CD4-positive, alpha-beta T cell (primary cell): ENCODE measurements at regions of chrX and their contacts with region 1.

Region 1: GRCh38 chrX:101931488-101932248 is at the start of gene ZMAT1:
- DNase-seq: peak; percentile 84 to 96 (median 92)
- ATAC-seq: peak; percentile 84
- H3K4me3 ChIP-seq: peak within 1 kb of the TSS; percentile 63
- H3K4me3 Mint-ChIP-seq: peak within 1 kb of the TSS; percentile 90
- H3K27ac ChIP-seq: peak within 1 kb of the TSS; percentile 69 to 82
- H3K27ac Mint-ChIP-seq: peak within 1 kb of the TSS; percentile 90
- H3K4me1 ChIP-seq: peaks cover 9% of the 10 kb centered on the region
- H3K4me1 Mint-ChIP-seq: peaks cover 17% of the 10 kb centered on the region
- H3K27me3 ChIP-seq: no peaks in the 10 kb centered on the region
- H3K27me3 Mint-ChIP-seq: no peaks in the 10 kb centered on the region
- CTCF ChIP-seq: no peak
- total RNA-seq, gene ZMAT1: 19.2 to 20.2 TPM

Region 2: GRCh38 chrX:101390664-101391525 is 540.8 kb before region 1 on chrX and contains the start of gene RPL36A:
- CTCF ChIA-PET with region 1: interaction called, 3 read pairs
- POLR2A ChIA-PET with region 1: interaction called, 18 read pairs
- intact Hi-C with region 1: no loop called
- DNase-seq: peak; percentile 57 to 92 (median 73)
- ATAC-seq: peak; percentile 92
- H3K4me3 ChIP-seq: peak within 1 kb of the TSS; percentile 71
- H3K4me3 Mint-ChIP-seq: peak within 1 kb of the TSS; percentile 95
- H3K27ac ChIP-seq: peak within 1 kb of the TSS; percentile 41 to 82
- H3K27ac Mint-ChIP-seq: peak within 1 kb of the TSS; percentile 95
- H3K4me1 ChIP-seq: peaks cover 15% of the 10 kb centered on the region
- H3K4me1 Mint-ChIP-seq: peaks cover 27% of the 10 kb centered on the region
- H3K27me3 ChIP-seq: no peaks in the 10 kb centered on the region
- H3K27me3 Mint-ChIP-seq: no peaks in the 10 kb centered on the region
- CTCF ChIP-seq: peak; percentile 72
- total RNA-seq, gene RPL36A: 417 to 536 TPM

Region 3: GRCh38 chrX:101415180-101416145 is 516.2 kb before region 1 on chrX:
- CTCF ChIA-PET with region 1: no interaction called
- POLR2A ChIA-PET with region 1: interaction called, 16 read pairs
- intact Hi-C with region 1: loop called (anchors 5 kb)
- DNase-seq: peak in 5 of 14 experiments; percentile 11 to 84 (median 76)
- ATAC-seq: peak; percentile 81
- H3K4me3 ChIP-seq: no peak overlapping the region
- H3K4me3 Mint-ChIP-seq: peak overlapping the region; percentile 84
- H3K27ac ChIP-seq: peak overlapping the region; percentile 21 to 55
- H3K27ac Mint-ChIP-seq: peak overlapping the region; percentile 80
- H3K4me1 ChIP-seq: peaks cover 36% of the 10 kb centered on the region
- H3K4me1 Mint-ChIP-seq: peaks cover 65% of the 10 kb centered on the region
- H3K27me3 ChIP-seq: no peaks in the 10 kb centered on the region
- H3K27me3 Mint-ChIP-seq: no peaks in the 10 kb centered on the region
- CTCF ChIP-seq: peak; percentile 64

Region 4: GRCh38 chrX:101799387-101799786 is 132.3 kb before region 1 on chrX:
- CTCF ChIA-PET with region 1: no interaction called
- POLR2A ChIA-PET with region 1: no interaction called
- intact Hi-C with region 1: loop called in 1 of 2 experiments (anchors 5 kb)
- DNase-seq: peak; percentile 51 to 89 (median 70)
- ATAC-seq: peak; percentile 100
- H3K4me3 ChIP-seq: no peak overlapping the region
- H3K4me3 Mint-ChIP-seq: peak overlapping the region; percentile 44
- H3K27ac ChIP-seq: no peak overlapping the region
- H3K27ac Mint-ChIP-seq: peak overlapping the region; percentile 21
- H3K4me1 ChIP-seq: peaks cover 3% of the 10 kb centered on the region
- H3K4me1 Mint-ChIP-seq: peaks cover 12% of the 10 kb centered on the region
- H3K27me3 ChIP-seq: no peaks in the 10 kb centered on the region
- H3K27me3 Mint-ChIP-seq: no peaks in the 10 kb centered on the region
- CTCF ChIP-seq: peak; percentile 57

Region 5: GRCh38 chrX:102155806-102156179 is 224.1 kb after region 1 on chrX and contains the start of gene BEX5:
- CTCF ChIA-PET with region 1: no interaction called
- POLR2A ChIA-PET with region 1: interaction called, 18 read pairs
- intact Hi-C with region 1: no loop called
- DNase-seq: peak; percentile 23 to 87 (median 46)
- ATAC-seq: peak; percentile 95
- H3K4me3 ChIP-seq: peak within 1 kb of the TSS; percentile 74
- H3K4me3 Mint-ChIP-seq: peak within 1 kb of the TSS; percentile 99
- H3K27ac ChIP-seq: peak within 1 kb of the TSS in 1 of 2 donors; percentile 75
- H3K27ac Mint-ChIP-seq: peak within 1 kb of the TSS; percentile 94
- H3K4me1 ChIP-seq: peaks cover 12% of the 10 kb centered on the region
- H3K4me1 Mint-ChIP-seq: peaks cover 20% of the 10 kb centered on the region
- H3K27me3 ChIP-seq: no peaks in the 10 kb centered on the region
- H3K27me3 Mint-ChIP-seq: peaks cover 5% of the 10 kb centered on the region
- CTCF ChIP-seq: no peak
- total RNA-seq, gene BEX5: 12.4 to 14.3 TPM

Region 6: DNA sequence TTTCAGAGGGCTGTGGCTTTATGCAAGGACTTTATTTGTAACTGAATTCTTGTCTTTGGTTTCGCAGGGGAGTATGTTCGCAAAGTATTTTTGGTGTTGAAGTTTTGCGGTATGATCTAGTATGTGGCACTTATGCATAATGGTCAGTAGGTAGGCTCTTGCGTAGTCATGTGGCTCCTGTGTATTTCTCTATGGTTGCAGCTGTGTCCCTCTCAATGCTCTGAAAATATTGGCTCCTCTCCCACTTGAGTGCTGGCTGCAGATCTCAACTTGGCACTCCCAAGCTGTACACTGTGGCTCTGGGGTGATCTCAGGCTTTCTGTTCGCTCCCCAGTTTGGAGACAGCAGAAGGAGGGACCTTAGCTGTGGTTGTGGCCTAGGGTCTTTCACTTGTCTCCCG is 692.4 kb after region 1 on chrX:
- CTCF ChIA-PET with region 1: no interaction called
- POLR2A ChIA-PET with region 1: no interaction called
- intact Hi-C with region 1: no loop called
- DNase-seq: no peak
- ATAC-seq: no peak
- H3K4me3 ChIP-seq: no peak overlapping the region
- H3K4me3 Mint-ChIP-seq: no peak overlapping the region
- H3K27ac ChIP-seq: no peak overlapping the region
- H3K27ac Mint-ChIP-seq: no peak overlapping the region
- H3K4me1 ChIP-seq: no peaks in the 10 kb centered on the region
- H3K4me1 Mint-ChIP-seq: peaks cover 19% of the 10 kb centered on the region
- H3K27me3 ChIP-seq: no peaks in the 10 kb centered on the region
- H3K27me3 Mint-ChIP-seq: no peaks in the 10 kb centered on the region
- CTCF ChIP-seq: no peak

Region 7: GRCh38 chrX:103214870-103215424 is 1283.3 kb after region 1 on chrX and contains the start of gene BEX4:
- CTCF ChIA-PET with region 1: no interaction called
- POLR2A ChIA-PET with region 1: no interaction called
- intact Hi-C with region 1: loop called in 1 of 2 experiments (anchors 10 kb)
- DNase-seq: peak; percentile 54 to 90 (median 76)
- ATAC-seq: peak; percentile 87
- H3K4me3 ChIP-seq: peak within 1 kb of the TSS; percentile 65
- H3K4me3 Mint-ChIP-seq: peak within 1 kb of the TSS; percentile 94
- H3K27ac ChIP-seq: peak within 1 kb of the TSS; percentile 73 to 78
- H3K27ac Mint-ChIP-seq: peak within 1 kb of the TSS; percentile 90
- H3K4me1 ChIP-seq: peaks cover 12% of the 10 kb centered on the region
- H3K4me1 Mint-ChIP-seq: peaks cover 13% of the 10 kb centered on the region
- H3K27me3 ChIP-seq: no peaks in the 10 kb centered on the region
- H3K27me3 Mint-ChIP-seq: peaks cover 4% of the 10 kb centered on the region
- CTCF ChIP-seq: no peak
- total RNA-seq, gene BEX4: 60.8 to 61.0 TPM